Psoas muscle (tissue), 8 donors: ENCODE measurements at regions of chr6 and their contacts with region 1.

Region 1: GRCh38 chr6:11232193-11232769 is at the start of gene NEDD9:
- DNase-seq: peak; percentile 92 to 94
- ATAC-seq: peak; percentile 96 to 99 (median 98)
- H3K4me3 ChIP-seq: peak within 1 kb of the TSS; percentile 80
- H3K27ac ChIP-seq: peak within 1 kb of the TSS; percentile 78
- H3K4me1 ChIP-seq: peaks cover 7% of the 10 kb centered on the region
- H3K27me3 ChIP-seq: no peaks in the 10 kb centered on the region
- CTCF ChIP-seq: no peak
- total RNA-seq, gene NEDD9: 11.2 to 15.7 (median 12.8) TPM

Region 2: GRCh38 chr6:11275598-11275997 is 43.3 kb after region 1 on chr6:
- intact Hi-C with region 1: no loop called
- DNase-seq: no peak
- ATAC-seq: no peak
- H3K4me3 ChIP-seq: no peak overlapping the region
- H3K27ac ChIP-seq: no peak overlapping the region
- H3K4me1 ChIP-seq: no peaks in the 10 kb centered on the region
- H3K27me3 ChIP-seq: no peaks in the 10 kb centered on the region
- CTCF ChIP-seq: no peak

Region 3: GRCh38 chr6:11309947-11310665 is 77.8 kb after region 1 on chr6:
- intact Hi-C with region 1: loop called in 1 of 2 experiments (anchors 5 kb)
- DNase-seq: no peak
- ATAC-seq: no peak
- H3K4me3 ChIP-seq: no peak overlapping the region
- H3K27ac ChIP-seq: no peak overlapping the region
- H3K4me1 ChIP-seq: no peaks in the 10 kb centered on the region
- H3K27me3 ChIP-seq: no peaks in the 10 kb centered on the region
- CTCF ChIP-seq: no peak

Region 4: DNA sequence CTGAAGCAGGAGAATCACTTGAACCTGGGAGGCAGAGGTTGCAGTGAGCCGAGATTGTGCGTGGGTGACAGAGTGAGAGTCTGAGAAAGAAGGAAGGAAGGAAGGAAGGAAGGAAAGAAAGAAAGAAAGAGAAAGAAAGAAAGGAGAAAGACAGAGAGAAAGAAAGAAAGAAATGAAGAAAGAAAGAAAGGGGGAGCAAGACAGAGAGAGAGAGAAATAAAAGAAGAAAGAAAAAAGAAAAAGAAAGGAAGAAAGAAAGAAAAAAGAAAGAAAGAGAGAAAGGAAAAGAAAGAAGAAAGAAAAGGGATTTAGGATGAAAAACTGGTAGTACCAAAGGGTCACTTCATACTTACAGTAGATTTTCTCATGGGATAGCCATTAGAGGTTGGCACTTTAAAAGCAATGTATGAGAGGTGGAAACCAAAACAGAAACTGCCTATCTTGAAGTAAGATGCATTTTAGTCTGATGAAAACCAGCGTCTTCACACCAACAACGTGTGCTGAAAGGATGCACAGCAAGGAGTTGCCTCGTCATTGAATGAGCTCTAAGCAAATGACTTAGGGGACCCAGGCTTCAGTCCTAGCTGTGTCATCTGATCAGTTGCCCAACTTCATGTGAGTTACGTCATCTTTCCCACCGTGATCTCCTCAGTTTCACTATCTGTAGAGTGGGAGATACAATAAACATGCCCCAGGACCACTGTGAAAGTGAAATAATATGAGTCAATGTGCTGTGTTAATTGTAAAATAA is 134.1 kb after region 1 on chr6:
- intact Hi-C with region 1: loop called in 1 of 2 experiments (anchors 5 kb)
- DNase-seq: no peak
- ATAC-seq: no peak
- H3K4me3 ChIP-seq: no peak overlapping the region
- H3K27ac ChIP-seq: peak overlapping the region; percentile 59
- H3K4me1 ChIP-seq: no peaks in the 10 kb centered on the region
- H3K27me3 ChIP-seq: no peaks in the 10 kb centered on the region
- CTCF ChIP-seq: no peak